ENCODE measurements at regions of chr10 and their contacts with region 1.

Region 1: DNA sequence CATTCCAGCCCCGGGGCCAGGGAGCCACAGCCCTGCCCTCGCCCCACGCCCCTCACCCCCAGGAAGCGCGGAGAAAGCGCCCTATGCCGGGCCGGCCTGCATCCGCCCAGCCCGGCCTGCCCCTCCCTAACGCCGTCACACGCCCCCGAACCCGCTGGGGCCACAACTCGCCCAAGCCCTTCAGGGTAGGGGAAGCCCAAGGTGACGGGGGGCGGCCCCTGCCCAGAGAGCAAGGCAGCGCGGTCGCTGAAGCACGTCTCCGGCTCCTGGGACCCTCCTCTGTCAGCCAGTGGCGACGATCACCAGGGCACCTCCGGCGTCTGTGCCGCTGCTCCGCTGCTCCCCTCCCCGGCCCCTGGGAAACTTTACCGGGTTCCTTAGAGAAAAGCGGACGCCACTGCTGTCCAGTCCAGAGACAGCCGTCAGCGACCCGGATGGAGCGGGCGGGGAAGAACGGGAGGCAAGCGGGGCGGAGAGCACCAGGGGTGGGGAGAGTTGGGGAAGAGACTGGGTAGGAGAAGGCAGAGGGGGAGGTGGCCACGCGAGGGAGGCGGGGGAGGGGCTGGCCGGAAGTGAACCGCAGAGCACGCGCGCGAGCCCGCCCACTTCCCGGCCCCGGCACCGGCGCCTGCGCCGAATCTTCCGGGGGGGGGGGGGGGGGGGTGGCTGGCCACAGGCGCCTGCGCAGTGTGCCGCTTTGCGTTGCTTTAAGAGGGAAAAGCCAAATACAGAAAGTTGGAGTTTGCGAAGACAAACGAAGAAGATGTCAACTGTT is at the start of gene HERC4:
- DNase-seq: peak; percentile 95
- ATAC-seq: peak; percentile 99
- total RNA-seq, gene HERC4: 31.9 to 34.7 TPM

Region 2: DNA sequence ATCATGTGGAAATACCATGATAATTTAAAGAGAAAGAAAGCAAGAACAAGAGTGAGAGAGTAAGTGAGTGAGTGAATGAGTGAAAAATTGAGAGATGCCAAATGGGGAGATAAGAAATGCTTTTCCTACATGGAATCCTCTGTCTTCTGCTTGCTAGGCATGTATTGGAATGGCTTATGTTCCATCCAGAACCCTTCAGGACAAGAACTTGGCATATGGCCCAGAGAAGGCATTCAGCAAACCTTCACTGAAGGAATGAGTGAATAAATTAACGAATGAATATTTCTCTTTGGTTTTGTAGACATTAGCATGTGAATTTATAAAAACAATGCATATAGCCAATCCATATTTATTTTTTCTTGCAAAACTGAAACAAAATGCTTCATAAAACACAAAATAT is 986.9 kb before region 1 on chr10:
- intact Hi-C with region 1: no loop called
- DNase-seq: no peak
- ATAC-seq: peak in 1 of 2 donors; percentile 31

Region 3: DNA sequence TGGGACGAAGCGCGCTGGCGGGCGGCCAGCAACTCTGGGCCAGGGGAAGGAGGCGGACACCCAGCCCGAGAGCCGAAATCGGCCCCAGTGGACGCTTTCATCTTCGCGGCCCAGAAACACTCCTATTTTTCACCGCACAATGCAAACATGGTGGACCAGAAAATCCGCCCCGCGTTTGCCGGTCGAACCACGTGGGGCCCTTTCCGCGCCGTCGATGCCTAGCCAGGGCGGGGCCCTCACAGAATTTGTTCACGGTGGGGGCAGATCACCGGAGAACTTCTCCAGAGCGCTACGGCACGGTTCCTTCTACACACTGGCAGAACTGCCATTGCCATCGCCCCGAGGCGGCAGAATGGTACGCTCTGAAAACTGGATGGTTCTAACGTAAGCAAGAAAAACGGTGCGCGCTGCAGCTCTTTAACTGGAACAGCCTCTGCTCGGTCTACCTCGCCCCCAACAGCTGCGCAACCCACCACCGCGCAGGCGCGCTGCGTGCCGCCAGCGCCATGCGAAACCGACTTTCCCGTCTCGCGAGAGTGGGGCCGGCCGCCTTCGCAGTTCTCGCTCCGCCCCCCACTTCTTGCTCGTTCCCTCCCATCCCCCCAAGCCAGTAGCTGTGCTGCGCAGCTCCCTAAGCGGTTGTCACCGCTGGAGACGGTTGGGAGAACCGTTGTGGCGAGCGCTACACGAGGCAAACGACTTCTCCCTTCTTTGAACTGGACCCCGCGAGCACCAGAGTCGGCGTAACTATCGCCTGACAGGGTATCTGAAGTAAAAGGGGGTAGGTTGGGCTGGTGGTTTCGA is 256.7 kb after region 1 on chr10 and contains the start of gene HNRNPH3:
- intact Hi-C with region 1: loop called in 1 of 2 experiments (anchors 10 kb)
- DNase-seq: peak; percentile 98
- ATAC-seq: peak; percentile 93
- total RNA-seq, gene HNRNPH3: 81.5 to 130 TPM